Naive thymus-derived CD8-positive, alpha-beta T cell (primary cell): ENCODE measurements at regions of chr1 and their contacts with region 1.

Region 1: DNA sequence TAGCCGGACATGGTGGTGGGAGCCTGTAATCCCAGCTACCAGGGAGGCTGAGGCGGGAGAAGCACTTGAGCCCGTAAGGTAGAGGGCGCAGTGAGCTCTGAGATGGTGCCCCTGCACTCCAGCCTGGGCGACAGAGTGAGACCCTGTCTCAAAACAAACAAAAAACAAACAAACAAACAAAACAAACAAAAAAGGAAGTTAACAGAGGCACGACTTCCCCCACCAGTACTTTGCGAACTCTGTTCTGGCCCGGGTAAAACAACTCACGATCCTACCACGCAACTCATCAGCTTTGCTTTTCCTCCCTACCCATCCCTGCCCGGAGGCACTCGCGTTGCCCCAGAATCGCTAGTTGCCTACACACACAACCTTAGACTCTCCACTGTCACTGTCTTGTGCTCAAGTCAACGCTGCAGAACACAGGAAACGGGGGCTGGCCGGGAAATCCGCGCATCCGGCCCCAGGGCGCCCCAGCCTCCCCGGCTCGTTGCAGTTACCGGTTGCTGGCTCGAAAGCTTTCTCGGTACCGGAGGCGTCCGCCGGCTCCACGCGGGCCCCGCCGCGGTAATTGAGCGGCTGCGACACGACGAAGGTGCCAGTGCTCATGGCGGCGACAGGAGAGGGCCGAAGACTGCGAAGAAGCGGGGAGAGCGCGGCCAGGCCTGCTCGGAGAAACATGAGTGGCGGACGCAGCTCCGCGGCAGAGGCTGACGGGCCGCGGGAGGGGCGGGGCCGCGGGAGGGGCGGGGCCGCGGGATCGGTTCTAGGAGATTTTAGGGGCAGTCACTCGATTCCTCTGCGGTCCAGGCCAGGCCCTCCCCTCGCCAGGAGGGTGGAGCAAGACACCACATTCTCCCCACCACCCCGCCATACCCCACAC is at the start of gene ALDH9A1:
- DNase-seq: peak; percentile 74 to 94 (median 83)
- ATAC-seq: peak; percentile 90 to 92
- H3K4me3 Mint-ChIP-seq: peak within 1 kb of the TSS; percentile 92 to 100 (median 98)
- H3K27ac Mint-ChIP-seq: peak within 1 kb of the TSS; percentile 93 to 99 (median 97)
- H3K4me1 Mint-ChIP-seq: peaks cover 13 to 39% (median 32%) of the 10 kb centered on the region in 4 donors
- H3K27me3 Mint-ChIP-seq: no peaks in the 10 kb centered on the region
- polyA plus RNA-seq, gene ALDH9A1: 67.7 to 90.3 (median 79.4) TPM

Region 2: GRCh38 chr1:165630629-165631341 is 67.3 kb before region 1 on chr1 and contains the start of gene MGST3:
- POLR2A ChIA-PET with region 1: interaction called, 15 read pairs
- DNase-seq: peak; percentile 87 to 98 (median 92)
- ATAC-seq: peak; percentile 90 to 92
- H3K4me3 Mint-ChIP-seq: no peak within 1 kb of the TSS
- H3K27ac Mint-ChIP-seq: peak within 1 kb of the TSS in 2 of 10 donors; percentile 82
- H3K4me1 Mint-ChIP-seq: peaks cover 0 to 24% (median 18%) of the 10 kb centered on the region in 4 donors
- H3K27me3 Mint-ChIP-seq: no peaks in the 10 kb centered on the region
- polyA plus RNA-seq, gene MGST3: 95.3 to 160 (median 116) TPM